GM12878 (cell line): ENCODE measurements at regions of chr4 and their contacts with region 1.

Region 1: DNA sequence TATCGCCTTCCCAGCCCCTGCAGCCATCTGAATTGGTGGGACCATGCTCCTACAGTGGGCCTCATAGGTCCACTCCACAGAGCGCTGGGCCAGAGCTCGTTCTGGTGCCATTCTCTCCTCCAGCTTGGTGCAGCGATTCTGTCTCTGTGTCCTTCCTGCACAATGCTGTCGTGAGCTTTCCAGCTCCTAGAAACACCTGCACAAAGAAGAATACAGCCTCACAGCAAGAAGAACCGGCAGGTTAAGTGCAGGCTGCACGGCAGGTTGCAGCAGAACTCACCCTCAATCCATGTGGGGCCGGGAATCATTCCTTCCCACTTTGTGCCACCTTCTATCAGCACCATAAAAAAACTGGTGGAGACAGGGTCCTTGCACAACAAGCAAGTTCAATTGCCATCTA is 101.2 kb upstream of the ENPP6 start:
- DNase-seq: no peak
- ATAC-seq: peak; percentile 1
- H3K4me3 ChIP-seq: peak overlapping the region; percentile 20; the same call in 1 of the 2 replicates
- H3K27ac ChIP-seq: peak overlapping the region; percentile 92
- H3K4me1 ChIP-seq: peaks cover 52% of the 10 kb centered on the region
- H3K27me3 ChIP-seq: no peaks in the 10 kb centered on the region
- CTCF ChIP-seq: no peak
- EP300 ChIP-seq: no peak
- POLR2A ChIP-seq: no peak
- RAD21 ChIP-seq: no peak

Region 2: DNA sequence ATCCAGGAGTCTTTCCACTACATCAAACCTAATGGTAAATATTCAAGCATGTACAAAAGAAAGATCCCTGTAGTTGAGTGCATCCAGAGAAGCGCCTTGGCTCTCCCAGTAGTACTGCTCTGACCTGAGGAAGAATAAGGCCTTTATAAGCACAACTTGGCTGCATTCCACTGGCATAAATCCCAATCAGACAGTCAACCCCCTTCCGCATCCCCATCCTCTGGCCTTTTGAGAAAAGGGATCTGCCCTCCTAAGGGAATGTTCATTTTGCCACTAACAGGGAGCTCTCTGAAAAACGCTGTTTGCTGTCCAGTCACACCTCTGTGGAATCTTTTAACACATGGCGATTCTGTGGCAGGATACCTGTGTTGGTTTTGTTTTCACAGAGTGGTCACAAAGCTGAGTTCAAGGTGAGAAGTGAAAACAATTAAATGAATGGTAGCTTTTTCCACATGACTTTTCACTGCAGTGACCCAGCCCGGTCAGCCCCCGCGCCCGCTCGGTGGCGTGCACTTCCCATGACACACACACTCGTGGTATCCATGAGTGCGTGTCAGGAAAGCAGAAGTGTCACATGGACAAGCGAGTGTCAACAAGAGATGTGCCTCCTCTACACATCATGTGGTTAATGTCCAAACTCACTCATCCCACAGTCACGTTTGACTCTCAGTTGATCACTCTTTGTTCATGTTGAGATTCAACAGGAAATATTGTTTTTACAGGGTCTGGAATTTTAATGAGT is 11.0 kb after region 1 on chr4:
- CTCF ChIA-PET with region 1: interaction called, 100 read pairs
- POLR2A ChIA-PET with region 1: interaction called, 202 read pairs
- RAD21 ChIA-PET with region 1: interaction called, 194 read pairs
- SMC1A ChIA-PET with region 1: interaction called, 218 read pairs
- in situ Hi-C with region 1: no loop called
- intact Hi-C with region 1: loop called (anchors 1 kb)
- DNase-seq: peak; percentile 90
- ATAC-seq: peak; percentile 81
- H3K4me3 ChIP-seq: no peak overlapping the region
- H3K27ac ChIP-seq: peak overlapping the region; percentile 90
- H3K4me1 ChIP-seq: peaks cover 44% of the 10 kb centered on the region
- H3K27me3 ChIP-seq: no peaks in the 10 kb centered on the region
- CTCF ChIP-seq: no peak; a peak in 2 of 6 replicates
- EP300 ChIP-seq: peak; percentile 98 to 100
- POLR2A ChIP-seq: peak; percentile 53; the same call in 1 of the 2 replicates
- RAD21 ChIP-seq: peak; percentile 28; the same call in 1 of the 2 replicates